CD14-positive monocyte (primary cell): ENCODE measurements at regions of chr1 and their contacts with region 1.

Region 1: GRCh38 chr1:113928941-113929749 is at the start of gene HIPK1:
- DNase-seq: peak; percentile 86 to 87 (median 87)
- H3K4me3 ChIP-seq: peak within 1 kb of the TSS; percentile 70 to 99 (median 94)
- H3K4me3 Mint-ChIP-seq: peak within 1 kb of the TSS; percentile 96 to 99
- H3K27ac ChIP-seq: peak within 1 kb of the TSS; percentile 91 to 99
- H3K27ac Mint-ChIP-seq: peak within 1 kb of the TSS; percentile 99 to 100 (median 100)
- H3K4me1 ChIP-seq: peaks cover 45 to 52% of the 10 kb centered on the region in 2 donors
- H3K4me1 Mint-ChIP-seq: peaks cover 51% of the 10 kb centered on the region
- H3K27me3 ChIP-seq: no peaks in the 10 kb centered on the region
- H3K27me3 Mint-ChIP-seq: peaks cover 1 to 5% (median 2%) of the 10 kb centered on the region in 3 donors
- CTCF ChIP-seq: no peak
- polyA plus RNA-seq, gene HIPK1: 10.1 to 57.2 (median 14.8) TPM

Region 2: GRCh38 chr1:113818578-113818977 is 110.6 kb before region 1 on chr1:
- intact Hi-C with region 1: no loop called
- DNase-seq: no peak
- H3K4me3 ChIP-seq: no peak overlapping the region
- H3K4me3 Mint-ChIP-seq: no peak overlapping the region
- H3K27ac ChIP-seq: no peak overlapping the region
- H3K27ac Mint-ChIP-seq: no peak overlapping the region
- H3K4me1 ChIP-seq: no peaks in the 10 kb centered on the region
- H3K4me1 Mint-ChIP-seq: no peaks in the 10 kb centered on the region
- H3K27me3 ChIP-seq: no peaks in the 10 kb centered on the region
- H3K27me3 Mint-ChIP-seq: peaks cover 0 to 3% (median 0%) of the 10 kb centered on the region in 3 donors
- CTCF ChIP-seq: no peak

Region 3: GRCh38 chr1:113871597-113872113 is 57.5 kb before region 1 on chr1 and contains the start of gene PTPN22:
- intact Hi-C with region 1: loop called (anchors 5 kb)
- DNase-seq: peak; percentile 88 to 92 (median 89)
- H3K4me3 ChIP-seq: peak within 1 kb of the TSS; percentile 44 to 83 (median 78)
- H3K4me3 Mint-ChIP-seq: peak within 1 kb of the TSS; percentile 69 to 76
- H3K27ac ChIP-seq: peak within 1 kb of the TSS; percentile 59 to 98
- H3K27ac Mint-ChIP-seq: peak within 1 kb of the TSS; percentile 95 to 99 (median 97)
- H3K4me1 ChIP-seq: peaks cover 62 to 83% of the 10 kb centered on the region in 2 donors
- H3K4me1 Mint-ChIP-seq: peaks cover 64% of the 10 kb centered on the region
- H3K27me3 ChIP-seq: no peaks in the 10 kb centered on the region
- H3K27me3 Mint-ChIP-seq: no peaks in the 10 kb centered on the region
- CTCF ChIP-seq: no peak
- polyA plus RNA-seq, gene PTPN22: 9.7 to 43.7 (median 29.7) TPM

Region 4: DNA sequence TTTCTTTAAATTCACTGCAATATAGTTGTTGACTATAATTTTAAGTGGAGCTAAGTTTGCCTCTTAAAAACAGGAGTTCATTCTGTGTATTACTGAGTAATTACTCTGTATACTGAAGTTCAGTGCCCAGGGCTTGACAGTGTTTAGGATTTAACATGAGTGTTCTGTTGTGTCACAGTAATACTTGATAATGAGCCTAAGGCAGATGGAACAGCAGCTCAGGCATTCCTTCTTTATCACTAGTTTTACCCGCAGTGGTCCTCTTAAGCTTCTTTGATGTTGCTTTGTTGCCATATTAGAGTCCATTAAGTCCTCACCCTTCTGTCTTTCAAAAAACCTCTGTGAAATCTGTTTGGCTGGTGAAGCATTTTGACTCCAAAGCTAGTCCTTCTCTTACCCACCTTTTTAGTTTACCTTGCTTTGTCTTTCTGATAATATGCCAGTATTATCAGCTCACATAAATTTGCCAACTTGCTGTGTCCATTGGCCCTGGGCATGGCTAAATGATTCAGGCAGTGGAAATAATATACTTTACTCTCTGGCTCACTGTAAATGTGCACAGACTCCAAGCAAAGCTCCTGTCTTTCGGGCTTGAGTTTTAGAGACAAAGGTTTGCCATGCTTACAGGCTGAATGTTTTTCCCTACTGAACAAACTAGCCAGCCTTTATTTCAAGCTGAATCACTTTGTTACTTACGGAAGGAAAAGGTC is 17.7 kb after region 1 on chr1:
- intact Hi-C with region 1: loop called in 1 of 2 experiments (anchors 2 kb)
- DNase-seq: no peak
- H3K4me3 ChIP-seq: no peak overlapping the region
- H3K4me3 Mint-ChIP-seq: peak overlapping the region in 1 of 2 donors; percentile 35
- H3K27ac ChIP-seq: peak overlapping the region in 1 of 2 donors; percentile 69
- H3K27ac Mint-ChIP-seq: peak overlapping the region in 5 of 7 donors; percentile 66 to 80 (median 77)
- H3K4me1 ChIP-seq: peaks cover 47 to 59% of the 10 kb centered on the region in 2 donors
- H3K4me1 Mint-ChIP-seq: peaks cover 62% of the 10 kb centered on the region
- H3K27me3 ChIP-seq: no peaks in the 10 kb centered on the region
- H3K27me3 Mint-ChIP-seq: peaks cover 0 to 1% (median 0%) of the 10 kb centered on the region in 3 donors
- CTCF ChIP-seq: no peak

Region 5: DNA sequence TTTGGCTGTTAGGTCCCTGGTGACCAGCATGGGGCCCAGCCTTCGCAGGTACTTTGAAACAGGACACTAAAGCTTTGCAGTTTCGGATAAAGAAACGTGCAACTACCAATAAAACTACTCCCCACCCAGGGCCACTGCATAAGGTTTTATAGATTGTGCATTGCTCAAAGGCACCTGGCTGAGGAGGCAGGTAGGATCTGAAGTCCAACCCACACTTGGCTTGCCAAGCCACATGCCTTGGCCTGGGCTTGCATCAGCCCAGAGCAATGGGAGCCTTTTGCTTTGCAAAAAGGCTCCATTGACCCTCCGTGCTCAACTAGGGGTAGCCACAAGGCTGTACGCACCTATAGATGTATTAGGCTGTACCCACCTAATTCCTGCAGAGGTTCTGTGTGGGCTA is 308.9 kb after region 1 on chr1:
- intact Hi-C with region 1: no loop called
- DNase-seq: no peak
- H3K4me3 ChIP-seq: no peak overlapping the region
- H3K4me3 Mint-ChIP-seq: no peak overlapping the region
- H3K27ac ChIP-seq: no peak overlapping the region
- H3K27ac Mint-ChIP-seq: no peak overlapping the region
- H3K4me1 ChIP-seq: peaks cover 4 to 7% of the 10 kb centered on the region in 2 donors
- H3K4me1 Mint-ChIP-seq: peaks cover 11% of the 10 kb centered on the region
- H3K27me3 ChIP-seq: no peaks in the 10 kb centered on the region
- H3K27me3 Mint-ChIP-seq: peaks cover 5 to 7% (median 7%) of the 10 kb centered on the region in 3 donors
- CTCF ChIP-seq: no peak

Region 6: DNA sequence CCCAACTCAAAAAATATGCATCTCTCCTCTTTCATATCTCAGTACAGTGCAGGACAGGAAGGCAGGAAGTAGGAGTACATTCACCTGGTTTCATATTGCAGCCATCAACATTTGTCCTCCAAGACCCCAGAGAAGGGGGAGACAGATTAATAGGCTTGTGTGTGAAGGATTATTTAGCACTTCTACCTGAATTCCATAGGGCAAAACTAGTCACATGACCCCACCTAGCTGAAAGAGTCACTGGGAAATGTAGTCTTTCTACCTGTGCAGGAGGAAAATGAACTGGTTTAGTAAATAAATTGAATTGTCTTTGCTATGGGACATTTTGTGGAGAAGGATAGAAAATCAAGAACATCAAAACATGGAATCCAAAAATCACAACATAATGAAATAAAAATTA is 595.8 kb after region 1 on chr1:
- intact Hi-C with region 1: no loop called
- DNase-seq: no peak
- H3K4me3 ChIP-seq: no peak overlapping the region
- H3K4me3 Mint-ChIP-seq: no peak overlapping the region
- H3K27ac ChIP-seq: no peak overlapping the region
- H3K27ac Mint-ChIP-seq: no peak overlapping the region
- H3K4me1 ChIP-seq: no peaks in the 10 kb centered on the region
- H3K4me1 Mint-ChIP-seq: no peaks in the 10 kb centered on the region
- H3K27me3 ChIP-seq: peaks cover under 1 to 2% of the 10 kb centered on the region in 2 donors
- H3K27me3 Mint-ChIP-seq: peaks cover 2 to 7% (median 5%) of the 10 kb centered on the region in 3 donors
- CTCF ChIP-seq: no peak